SK-N-SH (cell line): ENCODE measurements at regions of chr11 and their contacts with region 1.

Region 1: GRCh38 chr11:14907411-14908213 is 15.6 kb upstream of the CYP2R1 start:
- DNase-seq: peak; percentile 71
- H3K4me3 ChIP-seq: peak overlapping the region in 1 of 2 experiments; percentile 28; a peak in 1 of 4 replicates
- H3K27ac ChIP-seq: no peak overlapping the region
- H3K4me1 ChIP-seq: peaks cover 0 to 3% of the 10 kb centered on the region in 2 experiments; a peak in 2 of 4 replicates
- H3K27me3 ChIP-seq: no peaks in the 10 kb centered on the region; the same call in 1 of the 2 replicates
- CTCF ChIP-seq: peak; percentile 77
- EP300 ChIP-seq: no peak
- RAD21 ChIP-seq: peak; percentile 68

Region 2: DNA sequence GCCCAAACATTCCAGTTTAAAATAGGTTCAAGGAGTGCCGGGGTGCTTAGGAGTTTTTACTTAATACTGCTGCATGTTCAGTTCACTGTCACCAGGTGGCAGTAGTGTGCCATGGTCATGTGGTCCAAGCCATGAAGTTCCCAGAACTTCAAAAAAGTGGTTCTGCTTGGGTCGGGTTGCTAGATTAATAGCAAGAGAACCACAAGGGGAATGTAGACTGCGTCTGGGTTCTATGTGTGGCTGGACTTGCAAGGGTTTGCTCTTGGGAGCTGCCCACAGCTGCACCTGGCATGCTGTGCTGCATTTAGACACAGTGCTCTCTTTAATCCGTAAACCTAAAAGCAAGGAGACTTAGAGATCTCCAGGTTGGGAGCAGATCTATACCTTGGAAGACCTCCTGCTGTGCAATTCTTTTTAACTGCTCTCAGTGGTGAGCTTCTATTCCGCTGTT is 951.6 kb before region 1 on chr11:
- CTCF ChIA-PET with region 1: no interaction called
- POLR2A ChIA-PET with region 1: no interaction called
- DNase-seq: peak; percentile 44
- H3K4me3 ChIP-seq: no peak overlapping the region; a peak in 1 of 4 replicates
- H3K27ac ChIP-seq: no peak overlapping the region
- H3K4me1 ChIP-seq: peaks cover 0 to 6% of the 10 kb centered on the region in 2 experiments; a peak in 1 of 4 replicates
- H3K27me3 ChIP-seq: peaks cover 11% of the 10 kb centered on the region; the same call in 1 of the 2 replicates
- CTCF ChIP-seq: peak; percentile 86
- EP300 ChIP-seq: no peak
- RAD21 ChIP-seq: peak; percentile 87

Region 3: DNA sequence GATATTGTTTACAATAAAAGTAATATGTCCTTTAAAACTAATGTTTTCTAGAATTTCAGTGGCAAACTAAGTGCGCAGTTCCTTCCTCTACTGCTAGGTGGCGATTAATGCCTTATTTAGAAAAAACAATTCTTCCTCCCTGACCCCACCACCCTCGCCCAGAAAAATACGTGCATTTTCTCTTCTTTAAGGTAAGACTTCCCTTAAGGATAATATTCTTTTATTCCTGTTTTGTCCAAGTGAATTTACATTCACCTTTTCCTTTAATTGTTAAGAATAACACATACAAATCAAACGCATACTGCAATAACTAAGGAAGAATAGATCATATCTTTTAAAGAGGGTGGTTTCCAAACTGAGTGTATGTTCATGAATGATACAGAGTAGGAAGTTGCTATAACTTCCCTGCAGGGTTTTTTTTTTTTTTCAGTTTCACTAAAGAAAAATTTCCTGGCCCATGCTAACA is 370.4 kb before region 1 on chr11:
- CTCF ChIA-PET with region 1: interaction called, 26 read pairs
- POLR2A ChIA-PET with region 1: no interaction called
- DNase-seq: peak; percentile 68
- H3K4me3 ChIP-seq: no peak overlapping the region; a peak in 1 of 4 replicates
- H3K27ac ChIP-seq: no peak overlapping the region
- H3K4me1 ChIP-seq: peaks cover 0 to 5% of the 10 kb centered on the region in 2 experiments; a peak in 1 of 4 replicates
- H3K27me3 ChIP-seq: no peaks in the 10 kb centered on the region
- CTCF ChIP-seq: peak; percentile 82
- EP300 ChIP-seq: no peak
- RAD21 ChIP-seq: peak; percentile 87

Region 4: GRCh38 chr11:14892036-14892567 is 15.5 kb before region 1 on chr11 and contains the start of gene CYP2R1:
- CTCF ChIA-PET with region 1: interaction called, 62 read pairs
- POLR2A ChIA-PET with region 1: no interaction called
- DNase-seq: peak; percentile 96
- H3K4me3 ChIP-seq: peak within 1 kb of the TSS; percentile 75 to 88
- H3K27ac ChIP-seq: peak within 1 kb of the TSS; percentile 80 to 87
- H3K4me1 ChIP-seq: no peaks in the 10 kb centered on the region; a peak in 2 of 4 replicates
- H3K27me3 ChIP-seq: no peaks in the 10 kb centered on the region
- CTCF ChIP-seq: no peak
- EP300 ChIP-seq: no peak
- RAD21 ChIP-seq: no peak; the same call in 1 of the 2 replicates
- polyA plus RNA-seq, gene CYP2R1: 9.3 and 10.9 TPM in 2 replicates

Region 5: DNA sequence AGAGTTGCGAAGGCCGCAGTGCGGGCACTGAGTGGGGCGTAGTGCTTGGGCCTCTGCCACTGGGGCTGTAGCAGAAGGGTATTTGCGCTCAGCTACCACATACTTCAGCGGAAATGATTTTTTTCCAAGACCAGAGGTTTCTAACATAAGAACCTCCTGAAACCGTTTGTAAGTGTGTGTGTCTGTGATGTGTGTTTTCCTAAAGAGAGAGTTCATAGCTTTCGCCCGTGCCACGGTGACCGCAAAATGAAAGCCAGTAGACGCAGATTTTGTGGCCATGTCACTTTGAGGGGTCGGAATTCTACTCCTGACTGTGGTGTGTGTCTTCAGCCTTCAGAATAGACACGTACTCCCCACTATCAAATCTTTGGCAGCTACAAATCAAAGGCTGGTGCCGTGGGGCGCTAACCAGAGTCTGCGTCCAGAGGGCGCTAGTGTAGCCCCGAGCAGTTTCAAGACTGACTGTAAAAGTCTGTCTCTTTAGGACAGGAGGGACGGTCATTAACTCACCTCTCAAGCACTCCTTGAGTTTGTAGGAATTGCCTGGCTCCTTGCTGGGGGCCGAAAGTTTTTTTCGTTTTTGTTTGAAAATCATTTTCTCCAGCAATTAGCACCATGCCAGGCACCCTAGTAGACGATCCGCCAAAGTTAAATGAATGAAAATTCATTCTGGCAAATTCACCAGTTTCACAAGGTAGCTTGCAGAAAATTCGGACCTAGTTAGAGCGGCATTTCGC is 67.1 kb after region 1 on chr11:
- CTCF ChIA-PET with region 1: interaction called, 30 read pairs
- POLR2A ChIA-PET with region 1: no interaction called
- DNase-seq: peak; percentile 65
- H3K4me3 ChIP-seq: peak overlapping the region; percentile 14 to 33; a peak in 3 of 4 replicates
- H3K27ac ChIP-seq: no peak overlapping the region
- H3K4me1 ChIP-seq: peaks cover 0 to 23% of the 10 kb centered on the region in 2 experiments; a peak in 1 of 4 replicates
- H3K27me3 ChIP-seq: peaks cover 53% of the 10 kb centered on the region
- CTCF ChIP-seq: peak; percentile 63
- EP300 ChIP-seq: no peak
- RAD21 ChIP-seq: peak; percentile 51

Region 6: GRCh38 chr11:15093432-15093831 is 185.8 kb after region 1 on chr11:
- CTCF ChIA-PET with region 1: interaction called, 14 read pairs
- POLR2A ChIA-PET with region 1: no interaction called
- DNase-seq: no peak
- H3K4me3 ChIP-seq: no peak overlapping the region
- H3K27ac ChIP-seq: no peak overlapping the region
- H3K4me1 ChIP-seq: no peaks in the 10 kb centered on the region
- H3K27me3 ChIP-seq: no peaks in the 10 kb centered on the region
- CTCF ChIP-seq: no peak
- EP300 ChIP-seq: no peak
- RAD21 ChIP-seq: no peak